ENCODE measurements at regions of chr3 and their contacts with region 1.

Region 1: DNA sequence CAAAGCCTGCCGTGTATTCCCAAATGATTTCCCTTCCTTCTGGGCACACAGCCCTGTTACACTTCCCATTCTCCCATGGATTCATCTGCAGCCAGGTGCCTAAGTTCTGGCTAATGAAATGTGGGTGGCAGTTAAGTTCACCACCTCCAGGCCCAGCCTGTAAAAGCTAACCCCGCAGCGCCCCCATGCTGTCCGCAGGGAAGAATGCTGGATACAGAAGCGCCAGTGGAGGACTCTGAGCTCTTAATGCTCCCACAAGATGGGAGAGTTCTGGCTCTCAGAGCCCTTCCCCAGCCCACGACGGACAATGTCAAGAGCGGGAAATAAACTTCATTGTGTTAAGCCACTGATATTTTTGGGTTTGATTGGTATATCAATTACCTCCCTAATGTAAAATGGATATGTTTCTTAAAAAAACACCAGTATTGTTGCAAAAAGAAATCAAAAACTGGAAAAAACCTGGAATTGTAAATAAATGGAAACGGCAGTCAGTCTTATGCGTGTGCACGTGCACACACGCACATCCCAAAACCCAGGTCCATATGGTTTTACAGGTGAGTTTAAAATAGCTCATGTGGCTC is 37.7 kb upstream of the FGD5 start:
- DNase-seq: peak; percentile 27
- H3K4me3 ChIP-seq: no peak overlapping the region
- H3K27ac ChIP-seq: no peak overlapping the region
- H3K4me1 ChIP-seq: no peaks in the 10 kb centered on the region
- H3K27me3 ChIP-seq: no peaks in the 10 kb centered on the region
- CTCF ChIP-seq: peak in 3 of 4 experiments; percentile 33 to 43 (median 42)
- POLR2A ChIP-seq: no peak

Region 2: DNA sequence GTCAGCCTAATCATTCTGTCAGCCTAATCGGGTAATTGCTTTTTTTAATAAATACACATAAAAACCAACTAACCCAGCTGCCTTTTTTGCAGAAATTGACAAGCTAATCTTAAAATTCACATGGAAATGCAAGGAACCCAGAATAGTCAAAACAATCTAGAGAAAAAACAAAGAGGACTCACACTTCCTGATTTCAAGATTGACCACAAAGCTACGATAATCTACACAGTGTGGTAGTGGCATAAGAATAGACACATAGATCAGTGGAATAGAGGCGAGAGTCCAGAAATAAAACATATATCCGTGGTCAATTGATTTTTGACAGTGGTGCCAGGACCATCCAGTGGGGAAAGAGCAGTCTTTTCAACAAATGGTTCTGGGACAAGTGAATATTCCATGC is 108.4 kb before region 1 on chr3:
- intact Hi-C with region 1: loop called (anchors 2 kb)
- DNase-seq: no peak
- H3K4me3 ChIP-seq: no peak overlapping the region
- H3K27ac ChIP-seq: no peak overlapping the region
- H3K4me1 ChIP-seq: no peaks in the 10 kb centered on the region
- H3K27me3 ChIP-seq: no peaks in the 10 kb centered on the region
- CTCF ChIP-seq: no peak
- POLR2A ChIP-seq: no peak

Region 3: DNA sequence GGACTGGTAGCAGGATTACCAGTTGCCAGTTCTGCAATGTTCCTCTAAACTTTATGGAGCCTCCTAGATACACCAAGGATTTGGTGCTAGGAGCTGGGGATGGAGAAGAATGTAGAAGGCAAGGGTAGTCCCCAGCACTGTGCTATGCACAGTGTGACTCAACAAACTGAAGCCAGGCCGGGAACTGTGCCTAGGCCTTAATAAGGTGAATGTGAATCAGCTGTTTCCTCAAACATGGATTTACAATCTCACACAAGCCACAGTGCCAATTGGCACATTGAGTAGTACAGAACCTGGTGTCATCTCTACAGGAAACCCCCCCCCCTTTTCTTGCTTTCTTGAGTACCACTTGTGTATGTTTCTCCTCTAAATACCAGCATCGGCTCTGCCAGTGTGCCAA is 251.6 kb after region 1 on chr3:
- intact Hi-C with region 1: no loop called
- DNase-seq: no peak
- H3K4me3 ChIP-seq: no peak overlapping the region
- H3K27ac ChIP-seq: no peak overlapping the region
- H3K4me1 ChIP-seq: no peaks in the 10 kb centered on the region
- H3K27me3 ChIP-seq: no peaks in the 10 kb centered on the region
- CTCF ChIP-seq: no peak
- POLR2A ChIP-seq: no peak

Measured in prostate gland (tissue), 2 donors.